ENCODE measurements at regions of chr4 and their contacts with region 1.

Region 1: GRCh38 chr4:76305971-76306881 is at the start of gene STBD1:
- DNase-seq: peak; percentile 24 to 43 (median 32)
- H3K4me3 ChIP-seq: peak within 1 kb of the TSS; percentile 30 to 68
- H3K4me3 Mint-ChIP-seq: peak within 1 kb of the TSS; percentile 81 to 93 (median 86)
- H3K27ac ChIP-seq: peak within 1 kb of the TSS; percentile 34
- H3K27ac Mint-ChIP-seq: peak within 1 kb of the TSS; percentile 12 to 83 (median 60)
- H3K4me1 ChIP-seq: peaks cover 39% of the 10 kb centered on the region
- H3K4me1 Mint-ChIP-seq: peaks cover 29 to 54% (median 41%) of the 10 kb centered on the region in 4 donors
- H3K27me3 ChIP-seq: no peaks in the 10 kb centered on the region
- H3K27me3 Mint-ChIP-seq: no peaks in the 10 kb centered on the region
- total RNA-seq, gene STBD1: 3.6 to 3.8 TPM

Region 2: DNA sequence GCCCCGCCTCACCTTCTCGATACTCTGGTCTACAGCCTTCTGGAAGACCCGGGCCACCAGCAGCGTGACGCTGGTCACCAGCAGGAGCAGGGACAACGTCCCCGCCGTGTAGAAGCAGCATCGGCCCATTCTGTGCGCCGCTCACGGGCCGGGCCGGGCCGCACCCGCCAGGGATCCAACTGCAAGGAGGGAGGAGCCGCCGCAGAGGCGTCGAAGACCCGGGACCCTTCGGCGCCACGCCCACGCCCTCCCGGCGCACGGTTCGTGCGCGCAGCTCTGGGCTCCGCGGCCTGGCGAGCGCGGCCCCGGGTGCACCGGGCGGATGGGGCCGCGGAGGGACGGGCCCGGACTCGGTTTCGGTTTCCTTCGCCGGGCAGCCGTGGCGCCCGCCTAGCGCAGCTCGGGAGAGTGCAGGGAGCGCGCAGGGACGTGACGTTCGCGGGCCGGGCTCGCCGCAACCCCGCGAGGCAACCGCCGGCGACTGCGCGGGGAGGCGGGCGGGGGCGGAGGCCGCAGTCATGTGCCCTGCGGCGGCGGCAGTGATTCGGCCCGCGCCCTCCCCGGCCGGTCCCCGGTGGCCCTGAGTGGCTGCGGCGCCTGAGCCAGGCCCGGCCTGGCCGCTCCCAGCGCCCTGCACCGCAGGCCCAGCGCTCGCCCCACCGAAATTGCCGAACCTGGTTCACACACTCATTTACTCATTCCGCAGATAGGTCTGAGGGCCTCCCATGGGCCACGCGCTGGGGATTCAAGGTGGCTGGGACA is 92.6 kb before region 1 on chr4 and contains the start of gene SCARB2:
- CTCF ChIA-PET with region 1: interaction called, 6 read pairs
- POLR2A ChIA-PET with region 1: interaction called, 24 read pairs
- intact Hi-C with region 1: loop called (anchors 5 kb)
- DNase-seq: peak; percentile 79 to 88 (median 83)
- H3K4me3 ChIP-seq: peak within 1 kb of the TSS; percentile 77 to 90
- H3K4me3 Mint-ChIP-seq: peak within 1 kb of the TSS; percentile 89 to 97 (median 96)
- H3K27ac ChIP-seq: peak within 1 kb of the TSS; percentile 84
- H3K27ac Mint-ChIP-seq: peak within 1 kb of the TSS; percentile 92 to 98 (median 98)
- H3K4me1 ChIP-seq: peaks cover 43% of the 10 kb centered on the region
- H3K4me1 Mint-ChIP-seq: peaks cover 39 to 72% (median 48%) of the 10 kb centered on the region in 4 donors
- H3K27me3 ChIP-seq: no peaks in the 10 kb centered on the region
- H3K27me3 Mint-ChIP-seq: no peaks in the 10 kb centered on the region
- total RNA-seq, gene SCARB2: 23.3 to 23.5 TPM

Region 3: DNA sequence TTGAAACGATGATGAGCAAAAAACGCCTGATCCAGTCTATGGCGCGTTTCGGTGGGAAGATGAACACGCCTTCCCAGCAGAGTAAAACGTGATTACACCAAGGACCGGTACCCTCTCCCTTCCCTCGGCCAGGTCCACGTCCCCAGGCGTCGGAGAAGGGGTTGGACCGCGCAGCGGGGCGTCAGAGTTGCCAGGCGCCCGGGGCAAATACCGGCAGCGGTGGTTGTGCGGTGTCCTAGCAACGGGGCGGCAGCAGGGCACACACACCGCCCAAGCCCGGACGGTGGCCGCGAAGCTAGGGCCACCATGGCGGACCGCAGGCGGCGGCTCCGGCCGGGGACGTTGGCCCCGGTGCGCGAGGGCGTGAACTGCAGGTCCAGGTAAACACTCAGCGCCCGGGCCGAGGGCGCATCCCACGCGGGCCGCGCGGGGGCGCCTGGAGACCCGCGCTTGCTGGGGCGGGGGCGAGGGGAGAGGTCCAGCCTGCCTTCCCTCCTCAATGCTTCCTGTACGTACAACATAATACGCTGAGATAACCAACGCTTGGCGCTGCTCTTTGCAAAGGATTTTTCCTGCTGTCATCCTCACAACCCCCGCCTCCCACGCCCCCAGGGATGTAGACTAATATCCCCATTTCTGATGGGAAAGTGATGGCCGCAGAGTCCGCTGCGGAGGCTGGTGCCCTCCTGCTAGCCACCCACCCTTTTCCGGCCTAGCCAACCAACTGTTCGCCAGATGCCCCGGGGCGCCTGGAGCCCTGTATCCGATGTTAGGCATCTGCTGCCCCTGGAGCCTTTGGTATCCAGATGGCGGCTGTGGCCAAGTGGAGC is 54.6 kb before region 1 on chr4 and contains the start of gene FAM47E:
- CTCF ChIA-PET with region 1: interaction called, 5 read pairs
- POLR2A ChIA-PET with region 1: interaction called, 5 read pairs
- intact Hi-C with region 1: loop called (anchors 2 kb)
- DNase-seq: peak; percentile 33 to 41 (median 34)
- H3K4me3 ChIP-seq: peak within 1 kb of the TSS in 1 of 2 donors; percentile 47
- H3K4me3 Mint-ChIP-seq: peak within 1 kb of the TSS; percentile 71 to 89 (median 84)
- H3K27ac ChIP-seq: no peak within 1 kb of the TSS
- H3K27ac Mint-ChIP-seq: peak within 1 kb of the TSS in 3 of 7 donors; percentile 37 to 69 (median 44)
- H3K4me1 ChIP-seq: peaks cover 6% of the 10 kb centered on the region
- H3K4me1 Mint-ChIP-seq: peaks cover 3 to 8% (median 6%) of the 10 kb centered on the region in 4 donors
- H3K27me3 ChIP-seq: peaks cover 43% of the 10 kb centered on the region
- H3K27me3 Mint-ChIP-seq: peaks cover 48 to 51% of the 10 kb centered on the region in 2 donors
- total RNA-seq, gene FAM47E: 0.64 TPM in 1 of 2 experiments, not detected in the other

Region 4: DNA sequence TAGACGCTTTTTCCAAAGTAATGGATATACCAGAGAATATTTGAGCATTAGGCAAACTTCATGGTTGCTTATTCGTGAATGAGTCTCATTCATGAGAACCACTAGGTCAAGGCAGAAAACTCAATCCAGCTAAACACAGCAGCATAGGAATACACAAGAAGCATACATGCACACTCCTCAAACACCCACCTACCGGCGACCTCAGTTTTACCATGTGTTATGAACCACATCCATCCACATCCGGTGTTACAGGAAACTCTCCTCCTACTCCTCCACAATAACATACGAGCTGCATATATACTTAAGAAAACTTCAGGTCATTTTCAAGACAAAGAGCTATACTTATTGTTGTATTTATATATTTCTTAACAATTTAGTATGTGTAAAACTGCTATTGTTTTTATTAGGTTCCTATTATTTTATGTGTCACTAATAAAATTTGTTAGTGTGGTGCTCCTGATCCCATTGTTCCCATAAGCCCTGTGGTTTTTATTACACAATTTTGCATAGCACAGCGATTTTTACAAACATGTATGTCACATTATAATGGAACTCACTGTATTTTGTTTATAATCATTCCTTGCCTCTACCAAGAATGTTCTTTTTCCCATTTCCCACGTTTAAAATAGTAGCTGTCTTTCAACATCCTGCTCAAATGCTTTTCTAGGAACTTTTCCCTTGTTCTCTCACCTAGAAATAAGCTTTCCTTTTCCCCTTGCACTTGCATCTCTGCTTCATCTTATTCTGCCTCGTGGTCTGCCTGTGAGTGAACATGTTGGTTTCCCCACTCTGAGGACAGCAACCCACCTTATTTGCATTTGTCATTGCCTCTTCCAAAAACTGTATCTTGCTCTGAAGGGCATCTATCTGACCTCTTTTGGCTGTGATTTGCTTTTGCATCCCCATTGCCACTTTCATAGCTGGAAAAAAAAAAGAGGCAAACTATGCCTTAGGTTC is 48.6 kb after region 1 on chr4:
- CTCF ChIA-PET with region 1: interaction called, 21 read pairs
- POLR2A ChIA-PET with region 1: interaction called, 12 read pairs
- intact Hi-C with region 1: no loop called
- DNase-seq: peak in 4 of 5 donors; percentile 17 to 35 (median 26)
- H3K4me3 ChIP-seq: no peak overlapping the region
- H3K4me3 Mint-ChIP-seq: peak overlapping the region in 7 of 8 donors; percentile 7 to 77 (median 72)
- H3K27ac ChIP-seq: no peak overlapping the region
- H3K27ac Mint-ChIP-seq: peak overlapping the region in 3 of 7 donors; percentile 0 to 42 (median 2)
- H3K4me1 ChIP-seq: peaks cover 17% of the 10 kb centered on the region
- H3K4me1 Mint-ChIP-seq: peaks cover 9 to 17% (median 13%) of the 10 kb centered on the region in 4 donors
- H3K27me3 ChIP-seq: no peaks in the 10 kb centered on the region
- H3K27me3 Mint-ChIP-seq: peaks cover 2 to 4% of the 10 kb centered on the region in 2 donors

Measured in CD4-positive, alpha-beta memory T cell (primary cell).